ENCODE measurements at regions of chr12 and their contacts with region 1.

Region 1: GRCh38 chr12:38138225-38139221 is 178.1 kb upstream of the ALG10B start:
- ATAC-seq: peak; percentile 45 to 94 (median 74)
- H3K4me3 ChIP-seq: peak overlapping the region in 3 of 5 donors; percentile 11 to 33 (median 19)
- H3K27ac ChIP-seq: no peak overlapping the region
- H3K4me1 ChIP-seq: no peaks in the 10 kb centered on the region

Region 2: GRCh38 chr12:38025916-38026315 is 112.6 kb before region 1 on chr12:
- in situ Hi-C with region 1: loop called in 1 of 9 experiments (anchors 25 kb)
- ATAC-seq: no peak
- H3K4me3 ChIP-seq: no peak overlapping the region
- H3K27ac ChIP-seq: no peak overlapping the region
- H3K4me1 ChIP-seq: no peaks in the 10 kb centered on the region

Region 3: DNA sequence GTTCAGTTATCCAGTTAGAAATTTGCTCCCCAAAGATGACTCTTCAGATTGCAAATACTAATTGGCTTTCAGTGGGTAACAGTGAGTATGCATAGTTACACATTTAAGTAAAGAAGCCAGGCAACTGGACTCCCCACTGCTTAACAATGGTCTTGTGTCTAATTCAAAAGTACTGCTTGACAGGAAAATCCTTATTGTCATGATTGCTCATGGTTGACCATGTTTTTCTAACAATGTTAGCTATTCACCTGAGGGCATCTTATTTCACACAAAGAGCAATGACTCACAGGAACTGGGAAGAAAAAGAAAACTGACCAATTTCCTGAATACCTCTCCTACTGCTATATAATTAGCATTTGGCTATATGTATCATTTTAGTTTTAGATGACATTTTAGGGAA is 144.4 kb after region 1 on chr12:
- in situ Hi-C with region 1: loop called in 2 of 9 experiments (anchors 25 kb)
- ATAC-seq: no peak
- H3K4me3 ChIP-seq: no peak overlapping the region
- H3K27ac ChIP-seq: no peak overlapping the region
- H3K4me1 ChIP-seq: no peaks in the 10 kb centered on the region

Region 4: GRCh38 chr12:38316391-38317129 is 178.0 kb after region 1 on chr12 and contains the start of gene ALG10B:
- in situ Hi-C with region 1: loop called in 3 of 9 experiments (anchors 10 kb)
- ATAC-seq: peak; percentile 99 to 100 (median 100)
- H3K4me3 ChIP-seq: peak within 1 kb of the TSS; percentile 62 to 87 (median 70)
- H3K27ac ChIP-seq: peak within 1 kb of the TSS; percentile 42 to 89
- H3K4me1 ChIP-seq: peaks cover 2 to 7% of the 10 kb centered on the region in 2 donors
- total RNA-seq, gene ALG10B: 2.2 to 11.1 (median 8.3) TPM

Measured in motor neuron (in vitro differentiated cells).